ENCODE measurements at regions of chr3 and their contacts with region 1.

Region 1: GRCh38 chr3:172836390-172836997 is 86.0 kb downstream of the ECT2 start:
- DNase-seq: peak; percentile 65
- H3K4me3 ChIP-seq: no peak overlapping the region
- H3K27ac ChIP-seq: no peak overlapping the region
- H3K4me1 ChIP-seq: no peaks in the 10 kb centered on the region
- H3K27me3 ChIP-seq: no peaks in the 10 kb centered on the region
- CTCF ChIP-seq: peak; percentile 44 to 62
- POLR2A ChIP-seq: no peak

Region 2: GRCh38 chr3:172771672-172772071 is 64.8 kb before region 1 on chr3:
- CTCF ChIA-PET with region 1: no interaction called
- POLR2A ChIA-PET with region 1: no interaction called
- dilution Hi-C with region 1: no loop called
- intact Hi-C with region 1: no loop called
- DNase-seq: no peak
- H3K4me3 ChIP-seq: no peak overlapping the region
- H3K27ac ChIP-seq: no peak overlapping the region
- H3K4me1 ChIP-seq: no peaks in the 10 kb centered on the region
- H3K27me3 ChIP-seq: no peaks in the 10 kb centered on the region
- CTCF ChIP-seq: no peak
- POLR2A ChIP-seq: no peak

Region 3: DNA sequence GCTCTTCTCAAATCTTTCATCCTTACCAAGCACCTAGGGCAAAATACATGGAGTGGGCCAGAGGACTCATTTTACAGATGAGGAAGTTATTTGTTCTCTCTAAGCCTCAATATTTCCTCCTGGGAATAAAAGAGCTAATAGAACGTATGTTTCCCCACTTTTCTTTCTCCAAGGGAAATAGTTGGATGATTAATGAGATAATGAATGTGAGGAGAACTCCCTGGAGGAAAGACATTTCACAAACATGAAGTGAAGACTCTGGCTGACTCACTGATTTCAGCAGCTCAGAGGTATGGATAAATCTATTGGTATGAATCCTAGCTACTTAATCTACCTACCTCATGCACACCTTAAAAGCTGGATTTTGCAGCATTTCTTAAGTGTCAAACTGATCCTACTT is 12.4 kb after region 1 on chr3:
- CTCF ChIA-PET with region 1: interaction called, 15 read pairs
- POLR2A ChIA-PET with region 1: no interaction called
- dilution Hi-C with region 1: no loop called
- intact Hi-C with region 1: no loop called
- DNase-seq: peak; percentile 63
- H3K4me3 ChIP-seq: no peak overlapping the region
- H3K27ac ChIP-seq: no peak overlapping the region
- H3K4me1 ChIP-seq: peaks cover 16% of the 10 kb centered on the region
- H3K27me3 ChIP-seq: no peaks in the 10 kb centered on the region
- CTCF ChIP-seq: no peak
- POLR2A ChIP-seq: no peak

Region 4: DNA sequence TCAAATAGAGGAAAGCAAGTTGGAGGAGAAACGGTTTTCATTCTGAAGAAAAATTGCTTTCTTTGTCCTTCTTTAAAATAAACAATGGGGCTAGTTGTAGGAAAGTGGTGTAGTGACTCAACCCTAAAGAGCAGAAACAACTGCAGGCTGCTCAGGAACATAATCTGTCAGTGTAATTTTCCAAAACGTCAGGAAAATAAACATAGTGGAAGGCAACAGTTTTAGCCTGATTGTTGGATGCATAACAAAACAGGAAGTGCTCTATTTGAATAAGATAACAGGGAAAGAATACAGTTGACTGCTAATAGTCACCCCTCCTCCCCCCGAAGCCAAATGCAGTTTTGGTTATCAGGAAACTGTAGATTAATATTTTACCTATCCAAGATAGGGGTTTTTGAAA is 81.7 kb after region 1 on chr3:
- CTCF ChIA-PET with region 1: interaction called, 7 read pairs
- POLR2A ChIA-PET with region 1: no interaction called
- dilution Hi-C with region 1: no loop called
- intact Hi-C with region 1: loop called (anchors 5 kb)
- DNase-seq: peak; percentile 96
- H3K4me3 ChIP-seq: no peak overlapping the region
- H3K27ac ChIP-seq: peak overlapping the region; percentile 83
- H3K4me1 ChIP-seq: peaks cover 49% of the 10 kb centered on the region
- H3K27me3 ChIP-seq: no peaks in the 10 kb centered on the region
- CTCF ChIP-seq: no peak
- POLR2A ChIP-seq: peak; percentile 49

Region 5: GRCh38 chr3:172965256-172965655 is 128.8 kb after region 1 on chr3:
- CTCF ChIA-PET with region 1: interaction called, 10 read pairs
- POLR2A ChIA-PET with region 1: no interaction called
- dilution Hi-C with region 1: no loop called
- intact Hi-C with region 1: no loop called
- DNase-seq: peak; percentile 19
- H3K4me3 ChIP-seq: no peak overlapping the region
- H3K27ac ChIP-seq: no peak overlapping the region
- H3K4me1 ChIP-seq: no peaks in the 10 kb centered on the region
- H3K27me3 ChIP-seq: no peaks in the 10 kb centered on the region
- CTCF ChIP-seq: no peak
- POLR2A ChIP-seq: no peak

Region 6: DNA sequence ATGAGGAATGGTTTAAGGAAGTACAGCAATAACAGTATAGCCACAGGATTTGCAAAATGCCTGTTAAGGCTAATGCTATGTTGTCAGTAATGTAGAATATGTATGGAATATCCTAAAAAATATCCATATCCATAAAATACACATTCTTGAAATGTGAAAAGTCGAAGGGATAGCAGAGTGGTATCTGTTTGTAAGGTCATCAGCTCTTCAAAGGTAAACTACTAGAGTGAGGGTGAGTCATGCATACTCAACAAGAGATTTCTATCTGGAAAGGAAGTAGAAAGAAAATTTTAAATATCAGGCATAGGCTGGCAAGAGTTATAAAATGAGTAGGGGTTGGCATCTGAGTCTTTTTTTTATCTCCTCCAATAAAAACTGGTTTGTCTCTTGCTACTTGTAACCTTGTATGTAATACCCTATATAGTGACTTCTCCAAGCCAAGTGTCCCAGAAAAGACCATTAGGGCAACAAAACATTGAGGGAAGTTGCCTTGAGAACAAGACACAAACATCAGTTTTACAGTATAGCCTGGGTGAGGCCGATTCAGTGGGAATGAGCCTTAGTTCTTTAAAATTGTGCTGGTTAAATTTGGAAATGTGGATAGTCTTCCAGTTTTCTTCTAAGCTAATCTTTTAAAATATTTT is 201.5 kb after region 1 on chr3:
- CTCF ChIA-PET with region 1: interaction called, 22 read pairs
- POLR2A ChIA-PET with region 1: no interaction called
- dilution Hi-C with region 1: no loop called
- intact Hi-C with region 1: no loop called
- DNase-seq: peak; percentile 6
- H3K4me3 ChIP-seq: no peak overlapping the region
- H3K27ac ChIP-seq: no peak overlapping the region
- H3K4me1 ChIP-seq: no peaks in the 10 kb centered on the region
- H3K27me3 ChIP-seq: no peaks in the 10 kb centered on the region
- CTCF ChIP-seq: no peak
- POLR2A ChIP-seq: no peak